Activated CD4-positive, alpha-beta T cell treated with anti-CD3 and anti-CD28 coated beads for 36 hours (primary cell): ENCODE measurements at regions of chr5 and their contacts with region 1.

Region 1: DNA sequence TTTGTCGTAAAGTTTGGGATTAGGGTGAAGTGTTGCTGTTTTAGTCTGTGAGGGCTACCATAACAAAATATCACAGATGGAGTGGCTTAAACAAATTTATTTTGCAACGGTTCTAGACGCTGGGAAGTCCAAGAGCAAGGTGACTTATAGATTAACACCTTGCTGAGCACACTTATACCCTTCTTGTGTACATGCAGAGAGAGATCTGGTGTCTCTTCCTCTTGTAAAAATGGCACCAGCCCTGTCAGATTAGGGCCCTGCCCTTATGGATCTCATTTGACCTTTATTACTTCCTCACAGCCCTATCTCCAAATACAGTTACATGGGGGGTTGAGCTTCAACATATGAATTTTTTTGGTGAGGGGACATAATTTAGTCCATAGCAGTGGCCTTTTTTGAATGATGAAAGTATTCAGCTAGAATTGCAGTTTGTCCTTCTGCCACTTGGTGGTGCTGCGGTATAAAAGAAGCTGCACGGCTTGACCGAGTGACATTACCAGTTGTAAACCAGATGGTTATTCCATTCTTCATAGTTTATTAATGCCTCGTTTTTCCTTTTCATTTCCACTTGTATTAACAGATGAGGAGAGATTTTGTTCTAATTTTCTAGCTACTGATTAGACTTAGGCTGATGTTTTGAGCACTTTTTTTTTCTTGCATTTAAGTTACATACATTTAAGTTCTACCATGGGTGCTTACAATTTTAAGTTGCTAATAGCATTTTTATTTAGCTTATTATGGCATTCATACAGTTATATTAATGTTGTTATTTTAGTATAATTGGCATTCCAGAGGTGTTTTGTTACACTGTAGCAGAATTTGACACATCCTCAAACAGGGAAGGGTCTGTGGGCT is 19.4 kb downstream of the DCP2 start:
- DNase-seq: peak; percentile 84
- ATAC-seq: peak; percentile 71
- H3K4me3 Mint-ChIP-seq: no peak overlapping the region
- H3K27ac Mint-ChIP-seq: no peak overlapping the region
- H3K4me1 Mint-ChIP-seq: peaks cover 17% of the 10 kb centered on the region
- H3K27me3 Mint-ChIP-seq: no peaks in the 10 kb centered on the region

Region 2: GRCh38 chr5:112940670-112941069 is 55.3 kb before region 1 on chr5:
- CTCF ChIA-PET with region 1: no interaction called
- POLR2A ChIA-PET with region 1: no interaction called
- intact Hi-C with region 1: no loop called
- DNase-seq: no peak
- ATAC-seq: no peak
- H3K4me3 Mint-ChIP-seq: no peak overlapping the region
- H3K27ac Mint-ChIP-seq: no peak overlapping the region
- H3K4me1 Mint-ChIP-seq: peaks cover 3% of the 10 kb centered on the region
- H3K27me3 Mint-ChIP-seq: no peaks in the 10 kb centered on the region

Region 3: DNA sequence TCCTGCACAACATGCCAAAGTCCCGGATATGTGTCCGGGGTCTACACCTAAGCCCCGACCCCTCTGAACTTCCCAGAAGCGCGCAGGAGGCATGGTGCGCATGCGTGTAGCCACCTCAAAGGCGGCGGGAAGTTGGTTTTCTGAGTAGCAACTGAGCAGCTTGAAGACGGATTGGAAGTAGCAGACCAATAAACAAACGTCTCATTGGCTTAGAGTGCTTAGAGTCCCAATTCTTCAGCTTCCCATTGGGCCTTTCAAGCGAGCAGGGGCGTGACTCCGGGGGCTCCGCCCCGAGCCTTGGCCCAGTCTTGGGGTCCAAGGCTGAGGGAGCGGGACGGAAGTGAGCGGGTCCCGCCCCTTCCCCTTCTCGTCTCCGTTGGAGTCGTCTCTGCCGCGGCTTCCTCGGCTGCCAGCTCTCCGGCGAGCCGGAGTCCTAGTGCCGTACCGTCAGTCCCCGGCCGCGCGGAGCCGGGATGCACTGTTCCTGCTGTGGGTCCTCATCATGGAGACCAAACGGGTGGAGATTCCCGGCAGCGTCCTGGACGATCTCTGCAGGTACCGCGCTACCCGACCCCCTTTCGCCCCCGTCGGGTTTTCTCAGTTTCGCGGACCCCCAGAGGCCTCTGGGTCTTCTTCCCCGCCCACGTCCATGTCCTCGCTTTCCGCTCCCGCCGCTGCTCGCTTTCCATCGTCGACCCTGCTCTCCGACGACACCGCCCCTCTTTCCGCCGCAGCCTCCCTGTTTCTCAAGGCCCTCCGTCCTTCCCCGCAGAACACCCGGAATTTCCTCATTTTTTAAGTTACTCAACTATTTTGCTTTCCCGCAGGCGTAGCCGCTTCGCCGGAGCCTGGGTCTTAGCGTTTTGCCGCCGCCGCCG is 19.3 kb before region 1 on chr5 and contains the start of gene DCP2:
- CTCF ChIA-PET with region 1: interaction called, 32 read pairs
- POLR2A ChIA-PET with region 1: interaction called, 5 read pairs
- intact Hi-C with region 1: no loop called
- DNase-seq: peak; percentile 96
- ATAC-seq: peak; percentile 94
- H3K4me3 Mint-ChIP-seq: peak within 1 kb of the TSS; percentile 99
- H3K27ac Mint-ChIP-seq: peak within 1 kb of the TSS; percentile 98
- H3K4me1 Mint-ChIP-seq: peaks cover 39% of the 10 kb centered on the region
- H3K27me3 Mint-ChIP-seq: no peaks in the 10 kb centered on the region
- total RNA-seq, gene DCP2: 94.0 to 101 TPM

Region 4: GRCh38 chr5:113022661-113023060 is 26.7 kb after region 1 on chr5:
- CTCF ChIA-PET with region 1: interaction called, 12 read pairs
- POLR2A ChIA-PET with region 1: interaction called, 6 read pairs
- intact Hi-C with region 1: no loop called
- DNase-seq: no peak
- ATAC-seq: peak; percentile 57
- H3K4me3 Mint-ChIP-seq: peak overlapping the region; percentile 10
- H3K27ac Mint-ChIP-seq: peak overlapping the region; percentile 38
- H3K4me1 Mint-ChIP-seq: peaks cover 64% of the 10 kb centered on the region
- H3K27me3 Mint-ChIP-seq: no peaks in the 10 kb centered on the region

Region 5: GRCh38 chr5:113071401-113071800 is 75.4 kb after region 1 on chr5:
- CTCF ChIA-PET with region 1: interaction called, 15 read pairs
- POLR2A ChIA-PET with region 1: no interaction called
- intact Hi-C with region 1: no loop called
- DNase-seq: no peak
- ATAC-seq: no peak
- H3K4me3 Mint-ChIP-seq: no peak overlapping the region
- H3K27ac Mint-ChIP-seq: no peak overlapping the region
- H3K4me1 Mint-ChIP-seq: peaks cover 20% of the 10 kb centered on the region
- H3K27me3 Mint-ChIP-seq: no peaks in the 10 kb centered on the region

Region 6: DNA sequence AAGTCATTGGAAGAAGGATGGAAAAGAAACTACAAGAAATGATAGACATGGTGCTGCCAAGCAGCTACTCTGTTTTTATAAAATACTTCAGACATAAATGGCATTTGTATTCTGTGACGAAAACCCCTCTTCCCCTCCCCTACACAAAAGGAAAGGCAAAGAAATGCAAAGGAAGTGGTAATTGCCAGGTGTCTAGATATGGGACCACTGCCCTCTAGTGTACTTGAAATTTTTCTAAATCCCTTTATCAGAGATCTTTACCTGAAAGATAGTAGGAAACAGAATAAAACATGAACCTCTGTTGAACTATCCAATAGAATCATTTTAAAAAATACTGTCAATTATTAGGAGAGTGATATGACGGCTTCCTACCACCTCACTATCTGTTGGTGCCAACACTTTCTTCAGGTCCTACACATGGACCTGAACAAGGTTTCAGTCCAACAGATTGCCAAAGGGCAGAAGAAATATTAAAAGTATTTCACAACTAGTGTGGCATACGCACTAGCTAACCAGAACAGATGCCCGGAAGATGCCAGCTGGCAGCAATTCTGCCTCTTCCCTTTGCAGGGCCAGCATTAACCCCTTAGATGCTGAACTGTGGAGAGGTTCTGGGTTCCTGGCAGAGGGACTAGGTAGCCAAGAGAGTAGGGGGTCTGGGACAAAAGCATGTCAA is 334.7 kb after region 1 on chr5:
- CTCF ChIA-PET with region 1: interaction called, 24 read pairs
- POLR2A ChIA-PET with region 1: no interaction called
- intact Hi-C with region 1: loop called (anchors 1 kb)
- DNase-seq: peak; percentile 13
- ATAC-seq: peak; percentile 78
- H3K4me3 Mint-ChIP-seq: no peak overlapping the region
- H3K27ac Mint-ChIP-seq: peak overlapping the region; percentile 17
- H3K4me1 Mint-ChIP-seq: peaks cover 11% of the 10 kb centered on the region
- H3K27me3 Mint-ChIP-seq: no peaks in the 10 kb centered on the region

Region 7: DNA sequence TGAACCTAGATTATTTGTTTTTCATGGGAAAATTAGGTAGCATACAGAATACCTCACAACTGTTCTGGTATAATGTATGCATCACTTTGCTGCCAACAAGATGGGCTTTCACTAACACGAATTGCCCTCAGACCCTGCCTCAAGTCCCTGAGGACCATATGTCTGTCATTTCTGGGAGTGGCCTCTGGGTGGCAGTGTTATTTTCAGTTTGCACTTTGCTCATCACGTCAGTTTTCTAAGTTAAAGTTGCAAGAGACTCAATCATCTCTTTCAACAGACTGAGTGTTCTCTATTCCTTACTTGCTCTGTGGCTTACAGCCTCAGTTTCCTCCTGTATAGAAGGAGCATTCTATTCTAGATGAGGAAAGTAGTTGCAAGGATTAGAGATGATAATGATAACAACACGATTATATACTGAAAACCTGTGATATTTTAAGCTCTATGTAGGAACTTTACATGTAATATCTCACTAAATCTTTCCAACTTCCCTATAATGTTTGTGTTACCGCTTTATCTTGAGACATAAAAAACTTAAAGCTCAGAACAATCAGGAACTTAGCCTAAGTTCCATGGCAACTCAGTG is 383.1 kb after region 1 on chr5:
- CTCF ChIA-PET with region 1: interaction called, 7 read pairs
- POLR2A ChIA-PET with region 1: no interaction called
- intact Hi-C with region 1: loop called in 1 of 2 experiments (anchors 2 kb)
- DNase-seq: peak; percentile 75
- ATAC-seq: peak; percentile 74
- H3K4me3 Mint-ChIP-seq: no peak overlapping the region
- H3K27ac Mint-ChIP-seq: no peak overlapping the region
- H3K4me1 Mint-ChIP-seq: peaks cover 31% of the 10 kb centered on the region
- H3K27me3 Mint-ChIP-seq: peaks cover 15% of the 10 kb centered on the region